Psoas muscle (tissue), 8 donors: ENCODE measurements at regions of chr20 and their contacts with region 1.

Region 1: GRCh38 chr20:23357767-23358591 is 4.0 kb upstream of the GZF1 start:
- DNase-seq: peak; percentile 100
- ATAC-seq: peak; percentile 80 to 85 (median 82)
- H3K4me3 ChIP-seq: peak overlapping the region; percentile 88
- H3K27ac ChIP-seq: peak overlapping the region; percentile 98
- H3K4me1 ChIP-seq: peaks cover 26% of the 10 kb centered on the region
- H3K27me3 ChIP-seq: no peaks in the 10 kb centered on the region
- CTCF ChIP-seq: no peak

Region 2: DNA sequence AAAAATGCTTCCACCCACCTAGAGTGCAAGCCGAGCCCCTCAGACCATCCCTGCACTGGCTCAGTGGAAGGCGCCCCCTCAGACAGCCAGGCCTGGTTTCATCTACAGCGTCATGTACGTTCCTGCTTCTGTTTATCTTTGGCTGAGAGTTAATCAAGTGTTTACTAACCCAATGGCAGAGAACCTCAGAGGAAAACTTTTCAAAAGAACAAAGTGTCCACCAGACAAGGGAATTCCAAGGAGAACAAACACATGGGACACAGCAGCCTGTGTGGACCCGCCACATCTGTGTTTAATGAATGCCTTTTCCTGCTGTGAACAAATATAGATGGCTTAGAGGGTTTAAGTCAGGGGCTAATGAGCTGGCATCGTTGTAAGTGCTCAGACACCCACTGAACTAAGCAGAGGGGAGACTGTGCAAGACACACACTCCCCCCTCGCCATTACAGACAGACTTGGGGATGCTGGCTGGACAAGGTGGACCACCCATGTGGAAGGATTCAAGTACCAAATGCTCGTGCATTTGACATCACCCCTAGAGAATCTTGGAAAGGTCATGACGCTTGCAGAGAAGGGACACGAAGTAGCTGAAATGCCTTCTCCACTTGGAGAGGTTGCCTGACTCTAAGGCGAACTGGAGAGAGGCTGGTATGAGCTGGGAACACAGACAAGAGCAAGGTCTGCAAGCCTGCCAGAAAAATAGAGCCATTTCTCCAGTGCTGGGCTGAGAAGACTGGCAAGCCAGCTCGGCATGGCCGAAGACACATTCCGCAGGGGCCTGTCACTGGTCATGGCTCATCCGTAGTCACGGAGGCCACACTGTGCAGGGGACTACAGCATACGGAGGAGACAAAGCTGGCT is 60.9 kb before region 1 on chr20:
- intact Hi-C with region 1: no loop called
- DNase-seq: no peak
- ATAC-seq: no peak
- H3K4me3 ChIP-seq: no peak overlapping the region
- H3K27ac ChIP-seq: no peak overlapping the region
- H3K4me1 ChIP-seq: no peaks in the 10 kb centered on the region
- H3K27me3 ChIP-seq: no peaks in the 10 kb centered on the region
- CTCF ChIP-seq: no peak

Region 3: GRCh38 chr20:23399568-23400241 is 41.7 kb after region 1 on chr20:
- intact Hi-C with region 1: loop called in 1 of 2 experiments (anchors 5 kb)
- DNase-seq: no peak
- ATAC-seq: peak in 1 of 4 donors; percentile 54
- H3K4me3 ChIP-seq: no peak overlapping the region
- H3K27ac ChIP-seq: no peak overlapping the region
- H3K4me1 ChIP-seq: peaks cover 38% of the 10 kb centered on the region
- H3K27me3 ChIP-seq: no peaks in the 10 kb centered on the region
- CTCF ChIP-seq: no peak

Region 4: GRCh38 chr20:23420943-23421931 is 63.3 kb after region 1 on chr20 and contains the start of gene NAPB:
- intact Hi-C with region 1: loop called (anchors 5 to 10 kb)
- DNase-seq: peak; percentile 96 to 97
- ATAC-seq: peak; percentile 98 to 100 (median 99)
- H3K4me3 ChIP-seq: peak within 1 kb of the TSS; percentile 92
- H3K27ac ChIP-seq: peak within 1 kb of the TSS; percentile 93
- H3K4me1 ChIP-seq: peaks cover 34% of the 10 kb centered on the region
- H3K27me3 ChIP-seq: no peaks in the 10 kb centered on the region
- CTCF ChIP-seq: peak; percentile 61
- total RNA-seq, gene NAPB: 2.5 to 5.0 (median 3.5) TPM

Region 5: GRCh38 chr20:23637282-23638221 is 279.6 kb after region 1 on chr20 and contains the start of gene CST3:
- intact Hi-C with region 1: loop called (anchors 1 to 5 kb)
- DNase-seq: peak; percentile 93 to 96
- ATAC-seq: peak; percentile 61 to 76 (median 70)
- H3K4me3 ChIP-seq: peak within 1 kb of the TSS; percentile 99
- H3K27ac ChIP-seq: peak within 1 kb of the TSS; percentile 100
- H3K4me1 ChIP-seq: peaks cover 61% of the 10 kb centered on the region
- H3K27me3 ChIP-seq: no peaks in the 10 kb centered on the region
- CTCF ChIP-seq: no peak
- total RNA-seq, gene CST3: 422 to 713 (median 508) TPM